CD8-positive, alpha-beta T cell (primary cell): ENCODE measurements at regions of chr1 and their contacts with region 1.

Region 1: DNA sequence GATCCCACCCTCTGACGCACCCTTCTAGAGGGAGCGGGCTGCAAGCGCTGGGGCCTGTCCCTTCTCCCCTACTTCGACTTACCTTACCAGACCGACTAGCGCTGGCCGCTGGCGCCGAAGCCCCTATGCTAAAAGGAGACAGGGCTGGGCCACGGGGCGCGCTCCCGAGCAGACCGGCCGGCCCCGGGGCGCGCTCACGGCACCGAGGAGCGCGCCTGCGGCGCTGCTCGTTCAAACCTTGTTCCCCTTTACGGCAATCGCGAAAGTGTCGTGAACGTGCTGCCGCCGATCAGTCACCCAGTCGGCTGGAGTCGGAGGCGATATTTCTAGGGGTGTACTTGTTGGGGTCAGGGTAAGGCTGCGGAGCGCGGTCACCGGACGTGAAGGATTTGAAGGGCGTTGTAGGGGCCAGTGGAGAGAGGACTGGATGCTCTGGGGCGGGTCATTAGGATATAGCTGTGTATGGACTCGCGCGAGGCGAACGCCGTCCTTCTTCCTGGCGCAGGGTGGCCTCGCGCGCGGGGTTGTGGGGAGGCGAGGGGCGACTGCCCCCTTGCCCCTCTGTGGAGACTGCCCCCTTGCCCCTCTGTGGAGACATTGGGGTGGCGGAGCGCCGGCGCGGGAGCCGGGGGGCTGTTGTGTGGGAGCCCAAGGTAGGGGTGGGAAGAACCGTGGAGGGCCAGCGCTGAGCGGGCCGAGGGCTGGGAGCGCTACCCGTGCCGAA is at the starts of genes CEPT1 and DRAM2:
- DNase-seq: peak; percentile 86 to 96 (median 92)
- ATAC-seq: peak; percentile 74
- H3K4me3 ChIP-seq: peak within 1 kb of the TSS; percentile 89 to 97
- H3K4me3 Mint-ChIP-seq: peak within 1 kb of the TSS; percentile 100
- H3K27ac ChIP-seq: peak within 1 kb of the TSS; percentile 85 to 88
- H3K27ac Mint-ChIP-seq: peak within 1 kb of the TSS; percentile 100
- H3K4me1 ChIP-seq: peaks cover 51% of the 10 kb centered on the region
- H3K4me1 Mint-ChIP-seq: peaks cover 57% of the 10 kb centered on the region
- H3K27me3 ChIP-seq: no peaks in the 10 kb centered on the region
- H3K27me3 Mint-ChIP-seq: no peaks in the 10 kb centered on the region
- CTCF ChIP-seq: no peak
- total RNA-seq, gene CEPT1: 21.5 to 22.9 TPM
- total RNA-seq, gene DRAM2: 25.5 to 27.1 TPM

Region 2: DNA sequence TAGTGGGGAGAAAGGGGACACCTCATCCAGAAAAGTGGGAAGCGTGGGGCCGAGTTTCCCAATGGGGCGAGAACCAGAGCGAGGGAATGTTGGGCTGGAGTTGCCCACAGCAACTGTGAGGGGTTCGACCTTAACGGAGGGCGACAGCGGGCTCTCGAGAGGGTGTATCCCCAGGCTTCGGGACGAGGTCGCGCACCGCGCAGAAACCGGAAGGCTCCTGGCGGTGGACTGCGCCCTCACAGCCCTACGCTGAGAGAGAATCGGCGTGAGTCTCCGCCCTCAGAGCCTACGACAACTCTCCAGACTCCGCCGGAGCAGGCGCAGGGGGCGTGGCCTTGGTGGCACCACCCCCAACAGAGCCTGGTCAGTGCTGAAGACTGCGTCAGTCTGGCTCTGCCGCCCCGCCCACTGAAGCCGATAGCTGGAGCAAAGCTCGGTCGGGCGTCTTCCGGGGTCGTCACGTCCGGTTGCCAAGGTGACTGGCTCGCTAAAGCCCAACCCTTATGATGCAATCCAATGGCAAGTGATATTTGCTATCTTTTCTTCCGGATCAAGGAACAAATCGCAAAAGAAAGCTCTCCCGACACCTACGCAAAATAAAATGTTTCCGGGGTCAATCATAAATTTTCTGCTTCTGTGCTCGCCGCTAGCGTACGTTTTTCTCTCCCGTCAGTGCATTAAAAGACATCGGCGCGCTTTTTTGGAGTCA is 176.3 kb before region 1 on chr1 and contains the start of gene LRIF1:
- CTCF ChIA-PET with region 1: no interaction called
- POLR2A ChIA-PET with region 1: interaction called, 3 read pairs
- intact Hi-C with region 1: loop called in 1 of 2 experiments (anchors 2 kb)
- DNase-seq: peak; percentile 98 to 100 (median 100)
- ATAC-seq: peak; percentile 96
- H3K4me3 ChIP-seq: peak within 1 kb of the TSS; percentile 77 to 88
- H3K4me3 Mint-ChIP-seq: peak within 1 kb of the TSS; percentile 84
- H3K27ac ChIP-seq: peak within 1 kb of the TSS; percentile 98 to 99
- H3K27ac Mint-ChIP-seq: peak within 1 kb of the TSS; percentile 99
- H3K4me1 ChIP-seq: peaks cover 21% of the 10 kb centered on the region
- H3K4me1 Mint-ChIP-seq: peaks cover 33% of the 10 kb centered on the region
- H3K27me3 ChIP-seq: peaks cover 0 to 2% of the 10 kb centered on the region in 2 experiments
- H3K27me3 Mint-ChIP-seq: peaks cover 10% of the 10 kb centered on the region
- CTCF ChIP-seq: peak; percentile 59
- total RNA-seq, gene LRIF1: 1.8 to 1.9 TPM

Region 3: DNA sequence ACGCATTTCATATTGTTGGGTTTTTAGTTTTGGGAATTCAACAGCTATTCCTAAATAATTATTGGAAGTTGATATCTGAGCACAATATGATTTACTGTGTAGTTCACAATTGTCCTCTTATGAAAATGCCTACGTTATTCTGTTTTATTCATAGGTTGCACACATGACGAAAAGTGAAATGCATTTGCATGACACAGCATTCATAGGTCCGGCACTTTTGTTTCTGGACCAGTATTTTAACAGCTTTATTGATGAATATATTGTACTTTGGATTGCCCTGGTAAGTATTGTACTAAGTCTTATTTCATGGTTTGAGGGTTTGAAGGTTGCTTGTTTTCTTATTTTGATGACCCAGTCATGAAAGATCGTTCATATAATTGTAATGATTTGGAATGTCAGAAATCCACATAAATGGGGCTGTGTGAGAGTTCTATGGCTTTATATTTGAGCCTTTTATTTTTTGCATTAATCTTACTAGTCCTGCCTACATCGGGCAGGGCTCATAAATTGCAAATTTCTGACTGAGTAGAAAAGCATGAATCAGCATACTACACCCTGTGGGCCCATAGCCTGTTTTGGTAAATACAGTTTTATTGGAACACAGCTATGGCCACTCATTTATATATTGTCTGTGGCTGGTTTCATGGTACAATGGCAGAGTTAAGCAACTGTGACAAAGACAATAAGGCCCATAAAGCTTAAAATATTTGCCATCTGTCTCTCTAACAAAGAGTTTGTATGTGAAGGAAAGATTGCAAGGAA is 43.4 kb after region 1 on chr1:
- CTCF ChIA-PET with region 1: interaction called, 3 read pairs
- POLR2A ChIA-PET with region 1: interaction called, 7 read pairs
- intact Hi-C with region 1: loop called in 1 of 2 experiments (anchors 5 kb)
- DNase-seq: no peak
- ATAC-seq: no peak
- H3K4me3 ChIP-seq: no peak overlapping the region
- H3K4me3 Mint-ChIP-seq: no peak overlapping the region
- H3K27ac ChIP-seq: peak overlapping the region in 1 of 2 experiments; percentile 38
- H3K27ac Mint-ChIP-seq: peak overlapping the region; percentile 64
- H3K4me1 ChIP-seq: peaks cover 63% of the 10 kb centered on the region
- H3K4me1 Mint-ChIP-seq: peaks cover 89% of the 10 kb centered on the region
- H3K27me3 ChIP-seq: no peaks in the 10 kb centered on the region
- H3K27me3 Mint-ChIP-seq: no peaks in the 10 kb centered on the region
- CTCF ChIP-seq: no peak

Region 4: DNA sequence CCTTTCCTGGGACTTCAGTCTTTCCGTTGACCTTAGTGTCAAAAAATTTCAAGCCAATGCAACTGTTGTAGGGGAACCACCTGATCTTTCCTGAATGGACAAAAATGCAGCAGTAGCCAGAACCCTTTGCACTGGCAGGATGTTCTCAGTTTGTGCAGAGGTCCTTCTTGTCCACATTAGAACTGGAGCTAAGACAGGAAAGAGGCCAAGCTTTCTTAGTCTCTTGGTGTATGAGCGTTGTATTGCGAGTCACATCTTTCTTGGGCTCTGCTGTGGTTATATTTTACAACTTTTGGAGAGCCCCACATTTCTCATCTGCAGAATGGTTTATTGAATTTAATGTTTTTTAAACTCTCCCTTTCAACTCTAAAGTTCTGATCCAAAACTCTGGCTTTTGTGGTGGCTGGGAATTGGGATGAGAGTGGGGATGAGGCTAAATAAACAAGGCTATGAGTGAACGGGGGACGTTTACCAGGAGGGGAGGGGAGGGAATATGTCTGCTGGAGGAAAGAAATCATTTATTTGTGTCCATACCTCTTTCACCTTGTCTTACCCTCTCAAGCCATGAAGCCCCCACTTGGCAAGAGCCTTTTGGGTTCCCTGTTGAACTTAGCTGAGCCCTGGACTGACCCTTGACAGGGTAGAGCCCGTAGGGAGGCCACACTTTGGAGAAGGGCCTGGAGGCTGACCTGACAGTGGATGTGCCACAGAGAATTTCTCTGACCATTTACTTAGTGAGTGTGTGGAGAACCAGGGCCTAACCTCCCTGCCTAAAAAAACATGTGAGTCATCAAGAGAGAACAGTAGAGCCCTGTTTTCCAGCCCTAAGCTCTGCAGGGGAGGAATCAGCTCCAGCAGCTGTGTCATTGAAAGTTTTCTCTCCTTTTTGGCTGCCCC is 88.0 kb after region 1 on chr1:
- CTCF ChIA-PET with region 1: interaction called, 9 read pairs
- POLR2A ChIA-PET with region 1: interaction called, 7 read pairs
- intact Hi-C with region 1: loop called (anchors 2 to 5 kb)
- DNase-seq: peak in 1 of 9 experiments; percentile 23
- ATAC-seq: no peak
- H3K4me3 ChIP-seq: peak overlapping the region in 1 of 2 experiments; percentile 5
- H3K4me3 Mint-ChIP-seq: peak overlapping the region; percentile 22
- H3K27ac ChIP-seq: peak overlapping the region; percentile 4 to 79
- H3K27ac Mint-ChIP-seq: peak overlapping the region; percentile 89
- H3K4me1 ChIP-seq: peaks cover 73% of the 10 kb centered on the region
- H3K4me1 Mint-ChIP-seq: peaks cover 81% of the 10 kb centered on the region
- H3K27me3 ChIP-seq: no peaks in the 10 kb centered on the region
- H3K27me3 Mint-ChIP-seq: no peaks in the 10 kb centered on the region
- CTCF ChIP-seq: no peak

Region 5: DNA sequence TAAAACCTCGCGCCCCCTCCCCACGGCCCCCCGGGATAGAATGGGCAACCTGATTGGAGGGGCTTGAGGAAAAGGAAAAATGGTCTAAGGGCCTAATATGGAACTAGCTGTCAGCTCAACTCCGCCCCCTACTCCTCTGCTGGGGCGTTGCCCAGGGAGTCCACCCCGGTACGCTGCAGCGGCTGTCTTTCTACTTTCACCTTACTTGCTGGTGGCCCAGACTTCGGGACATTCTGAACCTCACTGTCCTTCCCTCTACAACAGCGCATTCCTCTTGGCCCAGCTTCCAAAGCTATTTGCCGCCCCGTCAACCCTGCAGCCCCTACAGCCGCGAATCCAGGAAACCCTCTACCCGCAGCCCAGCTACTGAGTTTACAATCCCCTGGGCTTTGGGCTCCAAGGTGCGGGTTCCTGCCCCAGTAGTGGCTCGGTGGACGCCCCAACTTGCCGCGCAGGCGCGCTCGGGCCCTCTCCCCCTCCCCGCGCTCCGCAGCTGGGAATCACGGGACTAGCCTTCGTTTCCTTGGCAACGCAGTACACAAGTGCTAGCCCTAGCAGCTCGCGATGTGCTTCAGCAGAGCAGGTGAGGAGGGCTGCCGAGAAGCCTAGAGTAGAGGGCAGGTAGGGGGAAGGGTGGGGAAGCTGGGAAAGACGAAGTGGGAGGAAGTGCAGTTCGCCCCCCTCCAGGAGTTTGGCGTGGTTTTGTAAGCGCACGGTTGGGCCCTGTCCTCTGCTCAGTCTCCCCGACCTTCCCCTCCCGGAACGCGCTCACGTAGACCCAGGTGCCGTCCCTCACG is 206.2 kb after region 1 on chr1:
- CTCF ChIA-PET with region 1: no interaction called
- POLR2A ChIA-PET with region 1: interaction called, 4 read pairs
- intact Hi-C with region 1: loop called in 1 of 2 experiments (anchors 2 kb)
- DNase-seq: peak; percentile 75 to 96 (median 87)
- ATAC-seq: peak; percentile 86
- H3K4me3 ChIP-seq: peak overlapping the region; percentile 67 to 68
- H3K4me3 Mint-ChIP-seq: peak overlapping the region; percentile 89
- H3K27ac ChIP-seq: peak overlapping the region; percentile 51 to 63
- H3K27ac Mint-ChIP-seq: peak overlapping the region; percentile 90
- H3K4me1 ChIP-seq: no peaks in the 10 kb centered on the region
- H3K4me1 Mint-ChIP-seq: peaks cover 23% of the 10 kb centered on the region
- H3K27me3 ChIP-seq: no peaks in the 10 kb centered on the region
- H3K27me3 Mint-ChIP-seq: no peaks in the 10 kb centered on the region
- CTCF ChIP-seq: no peak

Region 6: GRCh38 chr1:111619635-111620440 is 479.7 kb after region 1 on chr1 and contains the start of gene RAP1A:
- CTCF ChIA-PET with region 1: no interaction called
- POLR2A ChIA-PET with region 1: no interaction called
- intact Hi-C with region 1: loop called in 1 of 2 experiments (anchors 5 kb)
- DNase-seq: peak; percentile 93 to 97 (median 94)
- ATAC-seq: peak; percentile 80
- H3K4me3 ChIP-seq: peak within 1 kb of the TSS; percentile 71 to 87
- H3K4me3 Mint-ChIP-seq: peak within 1 kb of the TSS; percentile 95
- H3K27ac ChIP-seq: peak within 1 kb of the TSS; percentile 66 to 86
- H3K27ac Mint-ChIP-seq: peak within 1 kb of the TSS; percentile 95
- H3K4me1 ChIP-seq: peaks cover 60% of the 10 kb centered on the region
- H3K4me1 Mint-ChIP-seq: peaks cover 70% of the 10 kb centered on the region
- H3K27me3 ChIP-seq: no peaks in the 10 kb centered on the region
- H3K27me3 Mint-ChIP-seq: no peaks in the 10 kb centered on the region
- CTCF ChIP-seq: no peak
- total RNA-seq, gene RAP1A: 63.4 to 68.5 TPM